CD4-positive, alpha-beta T cell (primary cell): ENCODE measurements at regions of chr16 and their contacts with region 1.

Region 1: GRCh38 chr16:61968242-61969076 is 67.8 kb downstream of the CDH8 start:
- DNase-seq: no peak
- ATAC-seq: no peak
- H3K4me3 ChIP-seq: no peak overlapping the region
- H3K4me3 Mint-ChIP-seq: no peak overlapping the region
- H3K27ac ChIP-seq: no peak overlapping the region
- H3K27ac Mint-ChIP-seq: no peak overlapping the region
- H3K4me1 ChIP-seq: no peaks in the 10 kb centered on the region
- H3K4me1 Mint-ChIP-seq: no peaks in the 10 kb centered on the region
- H3K27me3 ChIP-seq: no peaks in the 10 kb centered on the region
- H3K27me3 Mint-ChIP-seq: no peaks in the 10 kb centered on the region
- CTCF ChIP-seq: no peak

Region 2: GRCh38 chr16:61926766-61927165 is 41.7 kb before region 1 on chr16:
- CTCF ChIA-PET with region 1: no interaction called
- POLR2A ChIA-PET with region 1: no interaction called
- intact Hi-C with region 1: no loop called
- DNase-seq: no peak
- ATAC-seq: no peak
- H3K4me3 ChIP-seq: no peak overlapping the region
- H3K4me3 Mint-ChIP-seq: no peak overlapping the region
- H3K27ac ChIP-seq: no peak overlapping the region
- H3K27ac Mint-ChIP-seq: no peak overlapping the region
- H3K4me1 ChIP-seq: no peaks in the 10 kb centered on the region
- H3K4me1 Mint-ChIP-seq: no peaks in the 10 kb centered on the region
- H3K27me3 ChIP-seq: no peaks in the 10 kb centered on the region
- H3K27me3 Mint-ChIP-seq: no peaks in the 10 kb centered on the region
- CTCF ChIP-seq: no peak

Region 3: DNA sequence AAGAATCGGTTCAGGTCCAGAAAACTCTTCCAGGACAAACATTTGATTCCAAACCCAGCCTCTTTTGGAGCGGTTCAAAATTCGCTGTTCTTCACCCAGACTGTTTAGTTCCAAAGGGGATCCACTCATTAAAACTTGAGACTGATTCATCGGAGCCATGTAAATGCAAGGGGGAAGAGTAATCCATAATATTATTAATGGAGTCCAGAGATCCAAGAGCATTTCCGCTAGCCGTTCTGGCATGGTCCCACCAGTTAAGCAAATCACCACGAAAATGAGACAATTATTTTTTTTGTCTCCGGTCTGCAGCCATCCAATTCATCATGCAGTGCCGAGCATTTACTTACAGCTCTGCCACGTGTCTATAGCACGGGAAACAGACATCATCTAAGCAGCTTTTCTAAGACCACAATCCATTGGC is 52.7 kb after region 1 on chr16:
- CTCF ChIA-PET with region 1: no interaction called
- POLR2A ChIA-PET with region 1: no interaction called
- intact Hi-C with region 1: loop called in 1 of 2 experiments (anchors 10 kb)
- DNase-seq: no peak
- ATAC-seq: no peak
- H3K4me3 ChIP-seq: no peak overlapping the region
- H3K4me3 Mint-ChIP-seq: no peak overlapping the region
- H3K27ac ChIP-seq: no peak overlapping the region
- H3K27ac Mint-ChIP-seq: no peak overlapping the region
- H3K4me1 ChIP-seq: no peaks in the 10 kb centered on the region
- H3K4me1 Mint-ChIP-seq: no peaks in the 10 kb centered on the region
- H3K27me3 ChIP-seq: no peaks in the 10 kb centered on the region
- H3K27me3 Mint-ChIP-seq: no peaks in the 10 kb centered on the region
- CTCF ChIP-seq: no peak

Region 4: GRCh38 chr16:62068747-62069146 is 100.3 kb after region 1 on chr16:
- CTCF ChIA-PET with region 1: no interaction called
- POLR2A ChIA-PET with region 1: no interaction called
- intact Hi-C with region 1: no loop called
- DNase-seq: no peak
- ATAC-seq: no peak
- H3K4me3 ChIP-seq: no peak overlapping the region
- H3K4me3 Mint-ChIP-seq: no peak overlapping the region
- H3K27ac ChIP-seq: no peak overlapping the region
- H3K27ac Mint-ChIP-seq: no peak overlapping the region
- H3K4me1 ChIP-seq: no peaks in the 10 kb centered on the region
- H3K4me1 Mint-ChIP-seq: no peaks in the 10 kb centered on the region
- H3K27me3 ChIP-seq: no peaks in the 10 kb centered on the region
- H3K27me3 Mint-ChIP-seq: no peaks in the 10 kb centered on the region
- CTCF ChIP-seq: no peak